ENCODE measurements at regions of chr3 and their contacts with region 1.

Region 1: DNA sequence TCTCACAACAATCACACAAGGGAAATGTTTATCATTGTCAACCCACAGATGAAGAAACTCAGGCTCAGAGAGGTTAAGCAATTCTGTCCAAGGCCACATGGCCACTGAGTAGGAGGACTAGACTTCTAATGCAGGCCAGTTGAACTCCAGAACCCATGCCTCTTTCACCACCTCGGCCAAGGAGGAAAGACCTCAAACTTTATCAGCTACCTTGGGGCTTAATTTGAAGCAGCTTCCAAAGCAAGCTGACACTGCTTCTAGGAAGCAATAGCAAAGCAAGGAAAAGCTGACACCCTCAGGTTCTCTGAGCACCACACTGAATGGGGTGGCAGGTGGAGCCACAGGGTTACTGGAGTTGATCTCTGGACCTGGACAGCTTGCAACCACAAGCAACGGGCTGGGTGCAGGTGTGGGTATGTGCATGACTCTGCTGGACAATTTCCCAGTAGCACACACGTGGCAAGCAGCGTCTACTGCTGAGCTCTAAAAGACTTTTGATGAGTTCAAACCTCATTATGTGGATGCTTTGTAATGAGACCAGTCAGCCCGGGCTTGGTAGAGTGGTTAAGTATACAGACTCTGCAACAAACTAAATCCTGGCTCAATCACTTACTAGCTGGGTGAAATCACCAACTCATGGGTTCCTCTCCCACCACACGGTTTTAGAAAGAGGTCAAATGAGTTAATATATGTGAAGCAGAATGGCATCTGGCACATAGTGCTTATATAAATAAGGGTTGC is 23.1 kb downstream of the CCNL1 start:
- DNase-seq: no peak
- ATAC-seq: no peak
- H3K4me3 ChIP-seq: no peak overlapping the region
- H3K4me3 Mint-ChIP-seq: no peak overlapping the region
- H3K27ac ChIP-seq: peak overlapping the region in 1 of 2 donors; percentile 14
- H3K27ac Mint-ChIP-seq: no peak overlapping the region
- H3K4me1 ChIP-seq: peaks cover 4 to 7% of the 10 kb centered on the region in 2 donors
- H3K4me1 Mint-ChIP-seq: peaks cover 6% of the 10 kb centered on the region
- H3K27me3 ChIP-seq: no peaks in the 10 kb centered on the region
- H3K27me3 Mint-ChIP-seq: no peaks in the 10 kb centered on the region
- CTCF ChIP-seq: no peak

Region 2: DNA sequence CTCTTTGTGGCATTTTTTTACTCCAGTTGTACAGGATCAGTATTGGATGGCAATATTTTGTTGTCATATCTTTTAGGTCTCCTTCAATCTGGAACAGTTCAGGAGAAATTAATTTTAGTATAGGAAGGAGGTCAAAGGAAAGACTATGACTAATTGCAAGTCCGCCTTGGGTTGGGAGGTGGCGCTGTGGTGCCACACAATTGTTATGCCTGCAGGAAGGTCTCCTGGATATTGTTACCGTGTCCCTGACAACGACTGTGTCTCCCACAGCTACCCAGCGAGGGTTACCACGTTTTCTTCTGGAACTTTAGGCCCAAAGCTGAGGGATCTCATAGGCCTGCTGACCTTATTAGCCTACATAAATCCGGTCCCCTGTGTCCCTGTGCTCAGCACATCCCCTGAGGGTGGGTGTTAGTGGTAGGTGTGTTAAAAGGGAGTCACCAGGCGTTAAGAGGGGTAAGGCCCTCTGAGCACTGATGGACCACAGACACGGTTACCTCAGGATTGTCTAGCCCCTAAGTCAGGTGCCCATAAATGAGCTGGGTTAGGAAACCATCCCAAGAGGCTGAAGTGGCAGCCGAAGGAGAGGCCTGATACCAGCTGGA is 984.9 kb before region 1 on chr3:
- CTCF ChIA-PET with region 1: interaction called, 44 read pairs
- POLR2A ChIA-PET with region 1: no interaction called
- intact Hi-C with region 1: no loop called
- DNase-seq: peak; percentile 47
- ATAC-seq: peak; percentile 28
- H3K4me3 ChIP-seq: no peak overlapping the region
- H3K4me3 Mint-ChIP-seq: no peak overlapping the region
- H3K27ac ChIP-seq: no peak overlapping the region
- H3K27ac Mint-ChIP-seq: no peak overlapping the region
- H3K4me1 ChIP-seq: no peaks in the 10 kb centered on the region
- H3K4me1 Mint-ChIP-seq: peaks cover 7% of the 10 kb centered on the region
- H3K27me3 ChIP-seq: peaks cover 0 to 1% (median 0%) of the 10 kb centered on the region in 4 experiments
- H3K27me3 Mint-ChIP-seq: peaks cover 15% of the 10 kb centered on the region
- CTCF ChIP-seq: peak; percentile 76

Region 3: GRCh38 chr3:156826144-156826895 is 310.5 kb before region 1 on chr3 and contains the start of gene LEKR1:
- CTCF ChIA-PET with region 1: no interaction called
- POLR2A ChIA-PET with region 1: no interaction called
- intact Hi-C with region 1: loop called (anchors 2 kb)
- DNase-seq: peak; percentile 80
- ATAC-seq: peak; percentile 73
- H3K4me3 ChIP-seq: peak within 1 kb of the TSS; percentile 72 to 87 (median 77)
- H3K4me3 Mint-ChIP-seq: peak within 1 kb of the TSS; percentile 93
- H3K27ac ChIP-seq: peak within 1 kb of the TSS; percentile 82 to 97
- H3K27ac Mint-ChIP-seq: peak within 1 kb of the TSS; percentile 96
- H3K4me1 ChIP-seq: peaks cover 12 to 14% of the 10 kb centered on the region in 2 donors
- H3K4me1 Mint-ChIP-seq: peaks cover 24% of the 10 kb centered on the region
- H3K27me3 ChIP-seq: no peaks in the 10 kb centered on the region
- H3K27me3 Mint-ChIP-seq: no peaks in the 10 kb centered on the region
- CTCF ChIP-seq: no peak
- total RNA-seq, gene LEKR1: 4.6 and 4.7 TPM in 2 replicates

Region 4: DNA sequence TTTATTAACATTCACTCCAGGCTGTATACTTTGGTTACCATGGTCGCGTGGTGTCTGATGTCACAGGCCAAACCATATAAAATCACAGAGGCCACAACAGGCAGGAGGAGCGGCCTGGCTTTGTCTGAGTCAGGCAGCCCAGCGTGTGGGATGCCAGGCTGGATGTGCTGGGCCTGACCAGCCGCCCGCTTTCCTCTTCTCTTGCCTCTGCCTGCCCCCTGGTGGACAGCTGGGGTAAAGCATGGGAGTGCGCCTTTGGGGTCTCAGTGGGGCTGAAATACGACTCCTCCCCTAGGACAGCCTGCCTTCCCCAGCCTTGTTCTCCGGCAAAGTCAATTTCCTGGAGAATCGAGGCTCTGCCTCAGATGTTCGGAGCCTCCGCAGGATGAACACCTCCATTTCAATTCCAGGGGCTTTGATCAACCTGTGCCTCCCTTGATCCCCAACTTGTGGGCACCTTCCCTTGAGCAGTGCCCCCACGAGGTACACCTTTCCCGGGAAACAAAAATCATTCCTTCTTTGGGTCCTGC is 55.1 kb before region 1 on chr3:
- CTCF ChIA-PET with region 1: interaction called, 51 read pairs
- POLR2A ChIA-PET with region 1: no interaction called
- intact Hi-C with region 1: loop called (anchors 2 kb)
- DNase-seq: peak; percentile 86
- ATAC-seq: peak; percentile 99
- H3K4me3 ChIP-seq: no peak overlapping the region
- H3K4me3 Mint-ChIP-seq: peak overlapping the region; percentile 2
- H3K27ac ChIP-seq: no peak overlapping the region
- H3K27ac Mint-ChIP-seq: peak overlapping the region; percentile 63
- H3K4me1 ChIP-seq: peaks cover 9 to 11% of the 10 kb centered on the region in 2 donors
- H3K4me1 Mint-ChIP-seq: peaks cover 11% of the 10 kb centered on the region
- H3K27me3 ChIP-seq: peaks cover 0 to 4% (median 0%) of the 10 kb centered on the region in 4 experiments
- H3K27me3 Mint-ChIP-seq: peaks cover 8% of the 10 kb centered on the region
- CTCF ChIP-seq: peak; percentile 96

Region 5: DNA sequence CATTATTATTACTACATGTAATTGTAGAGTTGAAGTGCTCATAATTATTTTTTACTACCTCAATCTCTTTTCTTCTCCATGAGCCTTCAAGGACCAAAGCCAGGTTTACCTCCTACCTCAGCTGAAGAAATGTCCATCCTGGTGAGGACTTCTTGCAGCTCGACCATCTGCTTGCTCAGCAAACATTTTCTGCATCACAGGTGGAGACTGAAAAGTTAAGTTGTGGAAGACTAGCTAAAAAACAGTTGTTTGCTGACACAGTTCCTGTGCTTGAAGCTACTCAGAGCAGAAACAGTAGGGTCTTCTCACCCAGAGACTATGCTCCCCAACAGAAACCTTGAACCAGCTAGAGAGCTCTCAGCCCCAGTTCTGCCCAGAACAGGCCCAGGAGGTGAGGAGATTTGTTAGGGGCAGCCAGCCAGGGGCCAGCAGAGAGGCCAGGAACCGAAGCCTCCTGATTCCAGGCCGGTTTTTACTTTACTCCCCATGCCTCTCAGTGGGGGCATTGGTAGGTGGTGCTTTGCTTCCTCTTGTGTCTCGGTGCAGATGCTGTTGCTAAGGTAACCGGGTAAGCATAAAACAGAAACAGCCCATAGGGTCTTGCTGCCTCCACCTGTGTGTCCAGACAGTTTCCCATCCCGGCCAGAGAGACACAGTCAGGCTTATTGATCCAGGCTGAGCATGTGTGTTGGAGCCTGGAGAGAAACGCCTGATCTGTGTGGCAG is 31.7 kb before region 1 on chr3:
- CTCF ChIA-PET with region 1: interaction called, 10 read pairs
- POLR2A ChIA-PET with region 1: no interaction called
- intact Hi-C with region 1: no loop called
- DNase-seq: peak; percentile 80
- ATAC-seq: peak; percentile 74
- H3K4me3 ChIP-seq: no peak overlapping the region
- H3K4me3 Mint-ChIP-seq: peak overlapping the region; percentile 16
- H3K27ac ChIP-seq: peak overlapping the region; percentile 23 to 55
- H3K27ac Mint-ChIP-seq: peak overlapping the region; percentile 83
- H3K4me1 ChIP-seq: peaks cover 25 to 36% of the 10 kb centered on the region in 2 donors
- H3K4me1 Mint-ChIP-seq: peaks cover 32% of the 10 kb centered on the region
- H3K27me3 ChIP-seq: no peaks in the 10 kb centered on the region
- H3K27me3 Mint-ChIP-seq: no peaks in the 10 kb centered on the region
- CTCF ChIP-seq: no peak

Region 6: GRCh38 chr3:158384019-158384418 is 1247.2 kb after region 1 on chr3:
- CTCF ChIA-PET with region 1: no interaction called
- POLR2A ChIA-PET with region 1: no interaction called
- intact Hi-C with region 1: no loop called
- DNase-seq: no peak
- ATAC-seq: no peak
- H3K4me3 ChIP-seq: no peak overlapping the region
- H3K4me3 Mint-ChIP-seq: no peak overlapping the region
- H3K27ac ChIP-seq: no peak overlapping the region
- H3K27ac Mint-ChIP-seq: no peak overlapping the region
- H3K4me1 ChIP-seq: no peaks in the 10 kb centered on the region
- H3K4me1 Mint-ChIP-seq: no peaks in the 10 kb centered on the region
- H3K27me3 ChIP-seq: no peaks in the 10 kb centered on the region
- H3K27me3 Mint-ChIP-seq: no peaks in the 10 kb centered on the region
- CTCF ChIP-seq: no peak

Measured in B cell (primary cell).